ENCODE measurements at regions of chr3 and their contacts with region 1.

Region 1: DNA sequence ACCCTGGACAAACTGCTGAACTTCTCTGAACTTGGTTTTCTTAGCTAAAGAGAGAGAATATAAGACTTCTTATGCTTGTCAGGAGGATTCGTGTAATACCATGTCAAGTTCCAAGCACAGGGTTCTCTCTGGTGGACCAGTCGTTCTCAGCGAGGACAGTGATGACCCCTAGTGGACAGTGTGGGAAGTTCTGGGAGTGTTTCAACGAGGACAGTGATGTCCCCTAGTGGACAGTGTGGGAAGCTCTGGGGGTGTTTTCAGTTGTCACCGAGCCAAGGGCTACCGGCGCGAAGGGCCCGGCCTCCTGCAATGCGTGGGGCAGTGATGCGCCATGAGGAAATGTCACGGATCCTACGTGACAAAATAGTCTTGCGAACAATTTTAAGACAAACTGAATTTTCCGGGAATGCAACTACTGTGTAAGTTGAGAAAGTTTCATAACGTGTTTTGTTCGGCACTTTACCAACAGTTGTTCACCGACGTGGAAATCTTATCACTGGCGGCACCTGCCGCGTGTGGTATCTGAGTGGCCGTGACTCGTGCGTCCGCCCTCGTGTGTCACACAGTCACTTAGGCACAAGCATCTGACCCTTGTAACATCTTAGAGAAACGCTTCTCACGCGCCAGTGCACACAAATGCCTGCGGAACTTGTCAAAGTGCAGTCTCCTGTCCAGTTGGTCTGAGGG is 39.3 kb upstream of the MUC4 start:
- DNase-seq: peak; percentile 89
- ATAC-seq: peak; percentile 85
- H3K4me3 ChIP-seq: peak overlapping the region in 1 of 2 experiments; percentile 26; a peak in 1 of 4 replicates
- H3K27ac ChIP-seq: no peak overlapping the region
- H3K4me1 ChIP-seq: no peaks in the 10 kb centered on the region
- H3K27me3 ChIP-seq: no peaks in the 10 kb centered on the region
- CTCF ChIP-seq: peak; percentile 100

Region 2: GRCh38 chr3:194828116-194828515 is 1022.9 kb before region 1 on chr3:
- CTCF ChIA-PET with region 1: no interaction called
- POLR2A ChIA-PET with region 1: no interaction called
- in situ Hi-C with region 1: no loop called
- intact Hi-C with region 1: no loop called
- DNase-seq: no peak
- ATAC-seq: no peak
- H3K4me3 ChIP-seq: no peak overlapping the region
- H3K27ac ChIP-seq: no peak overlapping the region
- H3K4me1 ChIP-seq: no peaks in the 10 kb centered on the region
- H3K27me3 ChIP-seq: no peaks in the 10 kb centered on the region
- CTCF ChIP-seq: no peak

Region 3: DNA sequence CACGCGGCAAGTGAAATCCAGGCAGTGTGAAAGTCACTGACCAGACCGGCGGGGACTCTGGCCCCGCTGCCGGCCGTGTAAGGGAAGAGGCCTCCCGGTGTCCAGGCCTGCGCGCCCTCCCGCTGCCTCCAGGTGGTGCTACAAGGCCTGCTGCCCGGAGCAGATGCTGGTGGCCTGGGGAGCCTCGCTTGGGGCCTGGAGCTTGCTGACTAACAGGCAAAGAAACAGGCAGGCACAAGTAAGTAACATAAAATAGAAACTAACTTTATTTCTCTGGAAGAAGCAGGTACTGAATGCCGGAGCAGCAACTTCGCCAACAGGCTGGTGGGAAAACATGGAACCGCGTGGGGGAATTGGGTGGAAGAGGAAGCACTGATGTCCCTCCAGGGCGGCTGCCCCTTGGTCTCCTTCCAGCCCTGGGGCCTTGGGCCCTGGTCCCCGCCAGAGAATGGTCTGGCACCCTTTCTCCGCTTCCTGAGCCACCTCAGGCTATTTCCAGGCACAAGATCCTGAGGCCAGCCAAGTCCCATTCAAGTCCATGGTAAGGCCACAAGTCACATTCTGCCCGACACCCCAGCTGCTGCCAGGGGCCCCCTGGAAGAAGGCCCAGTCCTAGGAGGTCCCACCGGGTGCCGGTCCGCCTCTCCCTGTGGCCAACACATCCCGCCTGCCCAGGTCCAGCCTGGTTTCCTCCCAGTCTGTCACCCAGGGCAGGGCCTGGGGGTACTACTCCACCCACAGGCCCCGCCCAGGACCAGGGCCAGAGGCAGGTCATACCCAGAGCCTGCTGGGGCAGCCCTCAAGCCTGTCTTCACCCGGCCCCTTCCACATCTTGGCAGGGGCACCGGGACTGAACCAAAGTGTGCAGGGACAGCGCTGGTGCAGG is 12.4 kb after region 1 on chr3:
- CTCF ChIA-PET with region 1: interaction called, 10 read pairs
- POLR2A ChIA-PET with region 1: no interaction called
- in situ Hi-C with region 1: no loop called
- intact Hi-C with region 1: no loop called
- DNase-seq: peak; percentile 38
- ATAC-seq: peak; percentile 96
- H3K4me3 ChIP-seq: no peak overlapping the region
- H3K27ac ChIP-seq: no peak overlapping the region
- H3K4me1 ChIP-seq: peaks cover 10% of the 10 kb centered on the region; the same call in 1 of the 2 replicates
- H3K27me3 ChIP-seq: no peaks in the 10 kb centered on the region
- CTCF ChIP-seq: peak; percentile 99

Region 4: DNA sequence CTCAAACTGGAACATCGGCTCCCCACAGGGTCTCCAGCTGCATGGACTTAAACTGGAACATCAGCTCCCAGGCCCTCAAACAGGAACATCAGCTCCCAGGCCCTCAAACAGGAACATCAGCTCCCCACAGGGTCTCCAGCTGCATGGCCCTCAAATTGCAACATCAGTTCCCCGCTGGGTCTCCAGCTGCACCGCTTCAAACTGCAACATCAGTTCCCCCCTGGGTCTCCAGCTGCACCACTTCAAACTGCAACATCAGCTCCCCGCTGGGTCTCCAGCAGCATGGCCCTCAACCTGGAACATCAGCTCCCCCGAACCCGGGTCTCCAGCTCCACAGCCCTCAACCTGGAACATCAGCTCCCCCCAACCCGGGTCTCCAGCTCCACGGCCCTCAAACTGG is 148.9 kb after region 1 on chr3:
- CTCF ChIA-PET with region 1: interaction called, 5 read pairs
- POLR2A ChIA-PET with region 1: no interaction called
- in situ Hi-C with region 1: no loop called
- intact Hi-C with region 1: loop called (anchors 10 kb)
- DNase-seq: no peak
- ATAC-seq: no peak
- H3K4me3 ChIP-seq: no peak overlapping the region
- H3K27ac ChIP-seq: no peak overlapping the region
- H3K4me1 ChIP-seq: no peaks in the 10 kb centered on the region
- H3K27me3 ChIP-seq: peaks cover 5% of the 10 kb centered on the region; the same call in 1 of the 2 replicates
- CTCF ChIP-seq: no peak

Region 5: DNA sequence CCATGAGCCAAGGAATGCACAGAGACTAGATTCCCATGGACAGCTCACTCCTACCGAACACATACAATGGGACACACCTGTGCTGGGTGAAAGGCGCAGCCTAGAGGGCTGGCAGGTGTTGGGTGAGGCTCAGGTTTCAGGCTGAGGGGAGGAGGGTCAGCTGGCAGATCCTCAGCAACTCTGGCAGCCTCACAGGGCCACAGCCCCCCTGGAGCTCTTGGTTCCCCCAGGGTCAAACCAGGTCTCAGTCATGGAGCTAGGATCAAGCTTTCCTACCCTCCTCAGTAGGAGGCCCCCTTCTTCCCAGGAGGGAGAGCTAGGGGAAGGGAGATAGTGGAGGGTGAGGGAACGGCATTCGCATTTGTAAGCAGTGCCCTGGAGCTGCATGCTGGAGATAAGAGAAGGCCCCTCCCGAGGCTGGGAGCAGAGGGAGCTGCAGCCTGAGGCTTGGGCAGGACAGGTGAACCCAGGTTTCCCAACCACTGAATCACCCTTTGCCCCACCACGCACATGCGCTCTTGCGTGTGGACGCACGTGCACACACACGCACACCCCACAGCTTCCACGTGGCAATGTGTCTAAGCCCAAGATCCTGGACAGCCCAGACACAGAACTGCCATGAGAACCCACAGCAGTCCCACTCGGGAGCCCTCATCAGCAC is 257.2 kb after region 1 on chr3:
- CTCF ChIA-PET with region 1: interaction called, 10 read pairs
- POLR2A ChIA-PET with region 1: no interaction called
- in situ Hi-C with region 1: no loop called
- intact Hi-C with region 1: no loop called
- DNase-seq: no peak
- ATAC-seq: peak; percentile 29; the same call in 1 of the 2 replicates
- H3K4me3 ChIP-seq: no peak overlapping the region
- H3K27ac ChIP-seq: no peak overlapping the region
- H3K4me1 ChIP-seq: no peaks in the 10 kb centered on the region
- H3K27me3 ChIP-seq: no peaks in the 10 kb centered on the region
- CTCF ChIP-seq: no peak

Region 6: DNA sequence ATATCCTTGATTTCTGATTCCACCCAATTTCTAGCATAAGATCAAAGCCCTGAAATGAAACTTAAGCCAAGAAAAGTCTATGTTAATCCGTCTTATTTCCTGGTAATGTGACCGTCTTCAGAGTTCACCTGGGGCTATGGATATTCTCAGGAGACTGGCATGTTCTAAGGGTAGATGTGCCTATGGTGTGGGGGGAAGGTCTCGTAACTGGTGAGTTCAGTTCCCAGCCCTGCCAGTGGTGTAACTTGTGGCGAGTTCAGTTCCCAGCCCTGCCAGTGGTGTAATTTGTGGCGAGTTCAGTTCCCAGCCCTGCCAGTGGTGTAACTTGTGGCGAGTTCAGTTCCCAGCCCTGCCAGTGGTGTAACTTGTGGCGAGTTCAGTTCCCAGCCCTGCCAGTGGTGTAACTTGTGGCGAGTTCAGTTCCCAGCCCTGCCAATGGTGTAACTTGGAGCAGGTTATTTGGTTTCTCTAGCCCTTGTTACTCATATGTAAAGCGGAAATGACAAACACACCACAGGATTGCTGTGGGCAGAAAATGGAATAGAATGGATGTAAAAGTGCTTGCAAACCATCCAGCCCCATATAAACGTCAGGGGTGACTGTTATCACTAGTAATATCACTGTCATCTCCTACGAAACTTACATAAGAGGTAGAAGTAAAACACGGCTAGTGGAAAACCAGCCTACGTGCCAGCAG is 395.8 kb after region 1 on chr3:
- CTCF ChIA-PET with region 1: no interaction called
- POLR2A ChIA-PET with region 1: no interaction called
- in situ Hi-C with region 1: no loop called
- intact Hi-C with region 1: no loop called
- DNase-seq: no peak
- ATAC-seq: no peak
- H3K4me3 ChIP-seq: no peak overlapping the region
- H3K27ac ChIP-seq: no peak overlapping the region
- H3K4me1 ChIP-seq: no peaks in the 10 kb centered on the region
- H3K27me3 ChIP-seq: no peaks in the 10 kb centered on the region
- CTCF ChIP-seq: no peak

Measured in Panc1 (cell line).